Activated T-helper 2 cell treated with anti-CD3 and anti-CD28 coated beads, Interferon-gamma antibody, Interleukin-2, Interleukin-4, amounts not matched to agents 10 μg/mL and 5 μg/mL and 100 μg/mL, durations not matched to agents 14 hours and 24 hours and 36 hours (primary cell): ENCODE measurements at regions of chr1 and their contacts with region 1.

Region 1: GRCh38 chr1:39183503-39184353 is 20.8 kb upstream of the MACF1 start:
- DNase-seq: peak; percentile 75
- H3K4me3 Mint-ChIP-seq: peak overlapping the region; percentile 5
- H3K27ac Mint-ChIP-seq: peak overlapping the region; percentile 86
- H3K4me1 Mint-ChIP-seq: peaks cover 43% of the 10 kb centered on the region
- H3K27me3 Mint-ChIP-seq: no peaks in the 10 kb centered on the region

Region 2: DNA sequence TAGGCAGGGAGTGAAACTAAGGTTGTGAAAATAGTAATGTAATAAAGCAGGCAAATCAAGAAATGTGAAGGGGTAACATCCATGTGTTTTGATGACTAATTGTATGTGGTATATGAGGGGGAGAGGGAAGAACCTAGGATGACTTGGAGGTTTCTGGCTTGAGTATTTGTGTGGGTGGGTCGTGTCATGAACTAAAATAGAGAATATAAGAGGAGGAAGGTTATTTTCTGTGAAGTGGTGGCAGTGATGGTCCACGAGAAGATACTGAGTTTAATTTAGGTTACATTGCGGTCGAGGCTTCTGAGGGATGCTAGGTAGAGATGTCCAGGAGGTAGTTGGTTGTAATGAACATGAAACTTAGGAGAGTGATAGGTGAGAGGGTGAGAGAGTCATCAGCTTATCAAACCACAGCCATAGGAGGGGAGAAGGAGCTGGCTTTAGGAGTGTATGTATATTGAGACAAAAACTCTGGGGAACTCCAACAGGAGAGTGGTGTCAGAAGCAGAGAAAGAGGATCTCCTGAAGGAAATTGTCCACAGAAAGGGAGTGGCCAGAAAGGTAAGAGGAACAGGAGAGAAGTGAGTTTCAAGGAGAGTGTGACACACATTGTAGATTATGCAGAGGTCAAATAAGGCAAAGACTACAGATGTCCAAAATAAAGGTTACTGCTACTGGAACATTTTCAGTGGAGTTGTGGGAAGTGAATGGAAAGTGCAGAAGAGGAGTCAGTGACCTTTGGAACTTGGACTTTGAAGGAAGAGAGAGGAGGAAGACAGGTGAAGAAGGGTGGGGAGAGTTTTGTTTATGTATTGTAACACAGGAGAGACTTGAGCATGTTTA is 68.2 kb before region 1 on chr1:
- intact Hi-C with region 1: loop called (anchors 2 kb)
- DNase-seq: no peak
- H3K4me3 Mint-ChIP-seq: no peak overlapping the region
- H3K27ac Mint-ChIP-seq: no peak overlapping the region
- H3K4me1 Mint-ChIP-seq: peaks cover 4% of the 10 kb centered on the region
- H3K27me3 Mint-ChIP-seq: peaks cover 7% of the 10 kb centered on the region

Region 3: GRCh38 chr1:39204441-39205081 is 20.8 kb after region 1 on chr1 and contains the start of gene MACF1:
- intact Hi-C with region 1: loop called (anchors 2 kb)
- DNase-seq: no peak
- H3K4me3 Mint-ChIP-seq: peak within 1 kb of the TSS; percentile 97
- H3K27ac Mint-ChIP-seq: peak within 1 kb of the TSS; percentile 96
- H3K4me1 Mint-ChIP-seq: peaks cover 51% of the 10 kb centered on the region
- H3K27me3 Mint-ChIP-seq: no peaks in the 10 kb centered on the region
- total RNA-seq, gene MACF1: 210 and 212 TPM in 2 replicates

Region 4: DNA sequence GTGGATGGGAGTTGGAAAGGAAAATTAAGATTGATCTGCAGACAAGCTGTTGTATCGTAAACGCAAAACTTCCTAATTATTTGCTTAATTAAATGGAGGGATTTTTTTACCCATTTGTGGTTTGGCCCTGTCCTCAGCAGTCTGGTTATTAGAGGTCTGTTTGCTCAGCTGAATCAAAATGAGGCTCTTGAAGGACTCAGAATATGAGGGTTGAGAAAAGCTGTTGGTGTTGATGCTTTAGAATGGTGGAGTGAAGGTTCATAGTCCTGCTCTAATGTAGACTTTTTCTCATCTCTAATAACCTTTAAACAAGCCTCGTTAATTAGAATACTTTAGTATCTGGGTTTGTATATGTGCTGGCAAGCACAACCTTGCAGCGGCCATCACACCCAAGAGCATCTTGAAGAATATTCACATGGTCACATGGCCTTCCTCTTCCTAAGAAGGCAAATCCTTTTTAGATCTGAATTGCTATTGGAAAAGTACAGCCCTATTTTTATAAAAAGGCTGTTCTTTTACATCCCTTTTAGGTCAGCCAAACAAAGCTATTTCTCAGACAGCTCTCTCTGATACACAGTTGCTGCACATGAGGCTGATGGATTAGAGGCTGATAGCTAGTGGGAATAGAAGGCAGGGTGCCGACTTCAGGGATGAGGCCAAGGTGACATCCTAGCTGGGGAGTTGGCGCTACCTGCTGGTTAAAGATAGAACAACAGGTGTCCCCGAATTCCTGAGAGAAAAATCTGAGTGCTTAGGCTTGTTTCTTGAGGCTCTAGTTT is 74.6 kb after region 1 on chr1:
- intact Hi-C with region 1: loop called (anchors 2 kb)
- DNase-seq: peak; percentile 37
- H3K4me3 Mint-ChIP-seq: no peak overlapping the region
- H3K27ac Mint-ChIP-seq: peak overlapping the region; percentile 46
- H3K4me1 Mint-ChIP-seq: peaks cover 32% of the 10 kb centered on the region
- H3K27me3 Mint-ChIP-seq: no peaks in the 10 kb centered on the region